ENCODE measurements at regions of chr12 and their contacts with region 1.

Region 1: GRCh38 chr12:6867413-6868210 is at the start of gene TPI1:
- DNase-seq: peak; percentile 39
- ATAC-seq: peak; percentile 73
- H3K4me3 ChIP-seq: peak within 1 kb of the TSS; percentile 88 to 96 (median 92)
- H3K27ac ChIP-seq: peak within 1 kb of the TSS; percentile 87
- H3K4me1 ChIP-seq: peaks cover 45% of the 10 kb centered on the region
- H3K27me3 ChIP-seq: no peaks in the 10 kb centered on the region; a peak in 1 of 5 replicates
- CTCF ChIP-seq: peak; percentile 5; the same call in 1 of the 2 replicates
- EP300 ChIP-seq: no peak
- POLR2A ChIP-seq: peak in 1 of 2 experiments; percentile 98; a peak in 2 of 4 replicates
- RAD21 ChIP-seq: peak; percentile 59
- total RNA-seq, gene TPI1: 945 and 1,237 TPM in 2 replicates

Region 2: GRCh38 chr12:6241495-6241894 is 626.1 kb before region 1 on chr12:
- CTCF ChIA-PET with region 1: no interaction called
- POLR2A ChIA-PET with region 1: no interaction called
- in situ Hi-C with region 1: no loop called
- intact Hi-C with region 1: no loop called
- DNase-seq: no peak
- ATAC-seq: no peak
- H3K4me3 ChIP-seq: no peak overlapping the region
- H3K27ac ChIP-seq: no peak overlapping the region
- H3K4me1 ChIP-seq: peaks cover 9% of the 10 kb centered on the region
- H3K27me3 ChIP-seq: peaks cover 3 to 27% of the 10 kb centered on the region in 2 experiments
- CTCF ChIP-seq: no peak
- EP300 ChIP-seq: no peak
- POLR2A ChIP-seq: no peak
- RAD21 ChIP-seq: no peak

Region 3: GRCh38 chr12:6818222-6818621 is 49.4 kb before region 1 on chr12:
- CTCF ChIA-PET with region 1: no interaction called
- POLR2A ChIA-PET with region 1: no interaction called
- in situ Hi-C with region 1: no loop called
- intact Hi-C with region 1: no loop called
- DNase-seq: no peak
- ATAC-seq: peak; percentile 32
- H3K4me3 ChIP-seq: no peak overlapping the region
- H3K27ac ChIP-seq: no peak overlapping the region
- H3K4me1 ChIP-seq: peaks cover 42% of the 10 kb centered on the region
- H3K27me3 ChIP-seq: peaks cover 7 to 34% of the 10 kb centered on the region in 2 experiments; a peak in 4 of 5 replicates
- CTCF ChIP-seq: no peak
- EP300 ChIP-seq: no peak
- POLR2A ChIP-seq: no peak
- RAD21 ChIP-seq: no peak

Region 4: GRCh38 chr12:6884539-6884938 is 16.9 kb after region 1 on chr12:
- CTCF ChIA-PET with region 1: no interaction called
- POLR2A ChIA-PET with region 1: interaction called, 73 read pairs
- in situ Hi-C with region 1: no loop called
- intact Hi-C with region 1: no loop called
- DNase-seq: no peak
- ATAC-seq: no peak
- H3K4me3 ChIP-seq: no peak overlapping the region
- H3K27ac ChIP-seq: no peak overlapping the region
- H3K4me1 ChIP-seq: peaks cover 61% of the 10 kb centered on the region
- H3K27me3 ChIP-seq: no peaks in the 10 kb centered on the region
- CTCF ChIP-seq: no peak
- EP300 ChIP-seq: no peak
- POLR2A ChIP-seq: no peak
- RAD21 ChIP-seq: no peak

Region 5: GRCh38 chr12:6914246-6914946 is 46.8 kb after region 1 on chr12 and contains the start of gene ENO2:
- CTCF ChIA-PET with region 1: no interaction called
- POLR2A ChIA-PET with region 1: interaction called, 13 read pairs
- in situ Hi-C with region 1: no loop called
- intact Hi-C with region 1: no loop called
- DNase-seq: peak; percentile 44
- ATAC-seq: peak; percentile 89
- H3K4me3 ChIP-seq: peak within 1 kb of the TSS; percentile 63 to 90 (median 77)
- H3K27ac ChIP-seq: peak within 1 kb of the TSS; percentile 84
- H3K4me1 ChIP-seq: peaks cover 48% of the 10 kb centered on the region
- H3K27me3 ChIP-seq: no peaks in the 10 kb centered on the region
- CTCF ChIP-seq: no peak
- EP300 ChIP-seq: no peak
- POLR2A ChIP-seq: peak in 1 of 2 experiments; percentile 68; a peak in 2 of 4 replicates
- RAD21 ChIP-seq: no peak
- total RNA-seq, gene ENO2: 15.9 and 19.3 TPM in 2 replicates

Region 6: GRCh38 chr12:6927379-6928024 is 59.9 kb after region 1 on chr12 and contains the start of gene ATN1:
- CTCF ChIA-PET with region 1: interaction called, 4 read pairs
- POLR2A ChIA-PET with region 1: interaction called, 24 read pairs
- in situ Hi-C with region 1: no loop called
- intact Hi-C with region 1: no loop called
- DNase-seq: no peak
- ATAC-seq: peak; percentile 18
- H3K4me3 ChIP-seq: peak within 1 kb of the TSS; percentile 82 to 93 (median 90)
- H3K27ac ChIP-seq: peak within 1 kb of the TSS; percentile 64
- H3K4me1 ChIP-seq: peaks cover 66% of the 10 kb centered on the region
- H3K27me3 ChIP-seq: no peaks in the 10 kb centered on the region; a peak in 1 of 5 replicates
- CTCF ChIP-seq: no peak
- EP300 ChIP-seq: no peak
- POLR2A ChIP-seq: peak in 1 of 2 experiments; percentile 53; a peak in 1 of 4 replicates
- RAD21 ChIP-seq: no peak
- total RNA-seq, gene ATN1: 2.1 TPM in 2 replicates

Region 7: GRCh38 chr12:6937481-6938297 is 70.1 kb after region 1 on chr12:
- CTCF ChIA-PET with region 1: interaction called, 14 read pairs
- POLR2A ChIA-PET with region 1: interaction called, 36 read pairs
- in situ Hi-C with region 1: no loop called
- intact Hi-C with region 1: no loop called
- DNase-seq: peak; percentile 91
- ATAC-seq: peak; percentile 93
- H3K4me3 ChIP-seq: peak overlapping the region; percentile 49 to 78 (median 70); a peak in 5 of 6 replicates
- H3K27ac ChIP-seq: peak overlapping the region; percentile 90
- H3K4me1 ChIP-seq: peaks cover 26% of the 10 kb centered on the region
- H3K27me3 ChIP-seq: no peaks in the 10 kb centered on the region
- CTCF ChIP-seq: peak; percentile 99
- EP300 ChIP-seq: 0 out of 4 replicates have a peak, but pooled peaks of 1 of the 2 experiments have one; percentile 10
- POLR2A ChIP-seq: peak in 1 of 2 experiments; percentile 63; a peak in 2 of 4 replicates
- RAD21 ChIP-seq: peak; percentile 66; the same call in 1 of the 2 replicates

Region 8: GRCh38 chr12:7154007-7154406 is 286.4 kb after region 1 on chr12:
- CTCF ChIA-PET with region 1: no interaction called
- POLR2A ChIA-PET with region 1: no interaction called
- in situ Hi-C with region 1: no loop called
- intact Hi-C with region 1: no loop called
- DNase-seq: no peak
- ATAC-seq: no peak
- H3K4me3 ChIP-seq: no peak overlapping the region
- H3K27ac ChIP-seq: no peak overlapping the region
- H3K4me1 ChIP-seq: no peaks in the 10 kb centered on the region
- H3K27me3 ChIP-seq: no peaks in the 10 kb centered on the region
- CTCF ChIP-seq: no peak
- EP300 ChIP-seq: no peak
- POLR2A ChIP-seq: no peak
- RAD21 ChIP-seq: no peak